Right ventricle myocardium inferior (tissue), 1 donor: ENCODE measurements at regions of chr3 and their contacts with region 1.

Region 1: DNA sequence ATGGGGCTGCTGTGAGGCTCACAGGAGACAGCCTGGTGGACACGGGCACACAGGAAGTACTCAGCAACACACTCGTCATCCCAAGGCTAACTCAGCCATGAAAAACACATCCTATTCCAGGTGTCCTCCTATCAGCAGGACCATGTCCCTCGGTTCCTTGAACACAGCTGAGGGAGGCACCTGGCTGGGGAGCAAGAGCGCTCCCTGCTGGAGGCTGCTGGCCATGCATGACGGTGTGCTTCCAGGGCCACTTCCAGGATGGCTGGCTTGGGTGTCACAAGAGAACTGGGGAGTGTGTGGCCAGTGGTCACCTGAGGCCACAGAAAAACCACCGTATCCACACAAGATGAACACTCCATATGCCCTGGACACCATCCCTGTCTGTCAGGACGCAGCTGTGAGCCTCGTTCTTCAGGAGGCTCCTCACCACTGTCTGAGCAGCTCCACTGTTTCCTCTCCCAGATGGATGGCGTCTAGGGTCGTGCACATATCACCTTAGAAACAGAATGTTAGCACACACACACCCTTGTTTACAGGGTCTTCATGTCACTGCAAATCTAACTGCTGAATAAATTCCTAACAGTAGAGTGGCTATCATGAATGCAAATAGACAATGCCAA is 31.0 kb downstream of the POC1A start:
- DNase-seq: peak; percentile 87
- ATAC-seq: peak; percentile 83

Region 2: DNA sequence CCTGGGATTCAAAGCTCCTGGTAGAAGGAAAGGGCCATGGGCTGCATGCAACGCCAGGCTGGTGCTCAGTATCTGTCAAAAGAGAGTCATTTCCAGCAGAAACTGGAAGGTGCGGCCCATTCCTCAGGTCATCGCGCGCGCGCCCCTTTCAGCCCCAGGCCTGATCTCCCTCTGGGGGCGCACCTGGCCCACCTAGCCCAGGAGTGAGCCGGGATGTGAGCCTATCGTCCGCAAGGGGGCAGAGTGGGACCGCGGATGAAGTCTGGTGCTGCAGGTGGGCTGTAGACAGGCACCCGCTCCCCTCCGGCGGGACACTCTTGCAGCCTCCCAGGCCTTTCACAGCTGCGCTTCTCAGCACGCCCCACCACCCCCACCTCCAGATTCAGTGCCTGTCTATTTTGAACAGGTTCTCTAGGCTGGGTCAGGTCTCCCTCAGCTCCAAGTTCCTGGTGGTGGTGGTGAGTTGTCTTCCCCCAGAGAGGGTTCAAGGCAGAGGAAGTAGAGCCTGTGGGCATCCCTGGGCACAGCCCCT is 121.7 kb before region 1 on chr3:
- intact Hi-C with region 1: loop called (anchors 1 kb)
- DNase-seq: peak; percentile 90
- ATAC-seq: peak; percentile 66

Region 3: DNA sequence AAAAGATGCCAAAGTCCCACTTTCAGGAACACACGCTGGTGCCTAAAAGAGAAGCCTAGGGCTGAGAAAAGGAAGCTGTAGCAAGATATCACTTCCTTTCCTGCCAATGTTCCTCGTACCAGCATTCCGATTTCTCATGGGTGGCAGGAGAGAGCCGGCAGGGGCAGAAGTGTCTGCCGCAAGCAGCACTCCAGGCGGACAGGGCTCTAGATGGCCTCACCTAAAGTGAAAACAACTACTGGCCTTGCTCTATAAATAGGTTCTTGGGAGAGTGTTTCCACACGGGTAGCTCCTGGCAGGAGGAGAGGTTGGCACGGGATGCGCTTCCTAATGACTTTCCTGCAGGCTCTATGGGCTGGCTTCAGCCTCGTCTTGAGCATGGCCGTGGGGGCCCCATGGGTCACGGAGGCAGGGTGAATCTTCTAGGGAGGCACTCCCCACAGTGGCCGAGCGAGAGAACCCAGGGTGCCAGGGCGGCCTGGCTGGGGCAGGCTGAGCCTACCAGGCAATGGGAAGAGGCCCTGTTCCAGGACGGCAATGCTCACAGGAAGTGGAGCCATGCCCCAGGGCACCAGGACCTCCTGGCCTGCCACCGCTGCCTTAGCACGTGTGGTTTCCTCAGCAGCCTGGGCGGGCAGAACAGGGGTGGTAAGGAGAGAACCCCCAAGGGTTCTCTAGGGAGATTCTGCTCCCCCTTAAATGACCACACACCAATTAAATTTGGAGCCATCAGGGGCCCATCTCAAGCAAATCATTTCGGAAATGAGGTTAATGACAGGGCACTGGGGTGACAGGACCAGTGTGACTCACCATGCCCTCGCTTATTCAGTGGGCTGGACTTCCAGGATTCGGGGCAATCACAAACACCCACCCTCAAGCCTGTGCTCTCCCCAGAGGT is 52.2 kb before region 1 on chr3:
- intact Hi-C with region 1: loop called (anchors 2 kb)
- DNase-seq: no peak
- ATAC-seq: peak; percentile 84

Region 4: GRCh38 chr3:52144034-52144795 is 21.0 kb after region 1 on chr3:
- intact Hi-C with region 1: loop called (anchors 2 kb)
- DNase-seq: peak; percentile 88
- ATAC-seq: peak; percentile 83

Region 5: DNA sequence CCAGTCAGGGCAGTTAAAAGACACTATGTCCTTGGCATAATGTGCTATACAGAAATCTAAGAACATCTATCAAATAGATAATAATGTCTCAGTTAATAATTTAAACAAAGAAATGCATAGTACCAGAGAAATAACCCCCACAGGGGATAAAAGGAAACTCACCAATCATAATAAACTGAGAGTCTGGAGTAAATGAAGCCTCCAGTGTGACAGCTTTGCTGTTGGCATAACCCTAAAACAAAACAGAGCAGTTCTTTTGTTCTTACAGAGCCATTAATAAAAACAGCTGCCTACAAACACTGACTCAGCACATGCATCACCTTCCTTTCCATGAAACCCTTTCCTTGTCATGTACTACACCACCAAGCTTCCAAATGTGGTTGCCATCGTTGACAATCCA is 135.8 kb after region 1 on chr3:
- intact Hi-C with region 1: no loop called
- DNase-seq: no peak
- ATAC-seq: no peak